Prostate gland (tissue), 2 donors: ENCODE measurements at regions of chr9 and their contacts with region 1.

Region 1: GRCh38 chr9:34637356-34638137 is at the start of gene SIGMAR1:
- DNase-seq: peak; percentile 92
- H3K4me3 ChIP-seq: peak within 1 kb of the TSS; percentile 74 to 76
- H3K27ac ChIP-seq: peak within 1 kb of the TSS; percentile 78 to 87
- H3K4me1 ChIP-seq: no peaks in the 10 kb centered on the region
- H3K27me3 ChIP-seq: no peaks in the 10 kb centered on the region
- CTCF ChIP-seq: peak in 1 of 4 experiments; percentile 26
- POLR2A ChIP-seq: peak; percentile 73
- total RNA-seq, gene SIGMAR1: 103 to 142 TPM

Region 2: DNA sequence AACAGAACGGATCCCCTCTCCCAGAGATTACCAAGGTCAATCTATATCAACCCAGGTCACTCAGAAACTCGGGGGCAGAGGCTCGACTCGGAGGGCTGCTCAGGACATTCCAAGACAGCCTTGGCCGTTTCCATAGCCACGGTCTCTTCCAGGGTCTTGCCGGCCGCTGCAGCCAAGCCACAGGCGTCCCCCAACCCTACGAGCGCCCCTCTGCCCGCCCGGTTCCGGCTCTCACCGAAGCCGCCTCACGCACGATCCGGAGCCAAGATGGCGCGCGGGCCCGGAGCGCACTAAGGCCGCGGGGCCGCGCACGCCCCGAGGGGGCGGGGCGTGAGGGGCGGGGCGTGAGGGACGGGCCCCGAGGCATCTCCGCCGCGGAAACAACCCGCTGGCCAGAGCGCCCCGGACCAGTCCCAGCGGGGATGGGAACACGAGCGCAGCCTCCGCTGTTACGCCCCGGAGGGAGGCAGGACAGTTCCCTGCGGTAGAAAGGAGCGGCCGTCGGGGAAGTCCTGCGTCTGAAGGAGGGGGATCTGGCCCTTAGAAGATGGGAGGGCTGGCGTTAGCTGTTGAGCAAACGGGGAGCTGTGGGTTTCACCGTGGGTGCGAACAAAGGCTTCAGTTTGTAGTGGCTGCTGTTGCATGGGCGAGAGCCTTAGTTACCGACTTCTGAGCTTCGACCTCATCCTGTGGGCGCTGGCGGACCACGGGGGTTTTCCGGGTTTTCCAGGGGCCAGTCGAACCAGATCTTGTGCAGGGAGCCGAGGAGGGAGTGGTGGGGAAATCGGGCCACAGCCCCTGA is 25.5 kb before region 1 on chr9 and contains the start of gene RPP25L:
- intact Hi-C with region 1: loop called (anchors 2 kb)
- DNase-seq: peak; percentile 82
- H3K4me3 ChIP-seq: peak within 1 kb of the TSS; percentile 69 to 70
- H3K27ac ChIP-seq: peak within 1 kb of the TSS; percentile 76 to 89
- H3K4me1 ChIP-seq: peaks cover 4% of the 10 kb centered on the region
- H3K27me3 ChIP-seq: no peaks in the 10 kb centered on the region
- CTCF ChIP-seq: peak in 2 of 4 experiments; percentile 14 to 21
- POLR2A ChIP-seq: peak; percentile 98
- total RNA-seq, gene RPP25L: 52.1 to 53.2 TPM